Kidney (tissue), 22 donors: ENCODE measurements at regions of chr20 and their contacts with region 1.

Region 1: GRCh38 chr20:39885975-39886649 is 802.9 kb downstream of the MAFB start:
- DNase-seq: peak; percentile 52 to 72 (median 62)
- H3K4me3 ChIP-seq: no peak overlapping the region
- H3K27ac ChIP-seq: no peak overlapping the region
- H3K4me1 ChIP-seq: no peaks in the 10 kb centered on the region
- H3K27me3 ChIP-seq: no peaks in the 10 kb centered on the region
- CTCF ChIP-seq: peak; percentile 63

Region 2: DNA sequence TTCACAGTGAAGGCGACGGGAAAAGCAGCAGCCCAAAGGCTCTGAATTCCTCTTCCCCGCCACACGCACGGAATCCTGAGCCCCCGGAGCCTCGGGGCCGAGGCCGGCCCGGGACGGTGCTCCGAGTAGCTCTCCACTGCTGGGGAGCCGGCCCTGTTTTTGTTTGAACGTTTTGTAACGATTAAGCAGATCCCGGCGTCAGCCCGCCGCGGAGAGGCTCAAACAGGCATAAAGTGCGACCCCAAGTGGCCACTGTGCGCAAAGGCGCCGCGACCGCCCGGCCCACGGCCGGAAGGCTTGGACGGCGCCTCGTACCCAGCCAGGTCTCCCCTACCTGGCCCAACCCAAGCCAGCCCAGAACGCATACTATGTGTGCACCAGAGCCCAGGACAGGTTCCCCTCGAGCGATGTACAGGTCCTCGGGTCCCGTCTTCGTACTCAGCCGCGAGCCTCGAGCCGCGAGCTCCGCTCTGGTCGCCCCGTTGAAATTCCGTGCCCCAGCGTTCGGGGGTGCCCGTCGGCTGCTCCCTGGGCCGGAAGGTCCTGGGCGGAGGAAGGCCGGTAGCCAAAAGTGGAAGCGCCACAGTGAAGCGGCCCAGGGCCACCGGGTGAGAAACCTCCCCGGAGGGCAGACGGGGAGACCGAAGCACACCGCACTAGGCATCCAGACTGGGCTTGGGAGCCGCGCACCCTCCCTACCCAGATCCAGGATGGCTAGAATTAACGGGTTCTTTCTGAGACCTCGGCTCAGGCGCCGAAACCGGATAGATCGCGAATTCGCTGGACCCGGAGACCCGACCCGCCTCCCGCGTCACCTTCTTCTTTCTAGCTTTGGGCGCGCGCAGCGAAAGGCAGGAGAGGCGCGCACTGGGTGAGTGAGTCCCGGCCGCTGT is 804.1 kb after region 1 on chr20:
- intact Hi-C with region 1: loop called (anchors 10 kb)
- DNase-seq: peak; percentile 93 to 96 (median 95)
- H3K4me3 ChIP-seq: peak overlapping the region; percentile 58 to 73 (median 65)
- H3K27ac ChIP-seq: peak overlapping the region; percentile 90 to 92
- H3K4me1 ChIP-seq: peaks cover 0 to 13% (median 0%) of the 10 kb centered on the region in 3 donors
- H3K27me3 ChIP-seq: peaks cover 42% of the 10 kb centered on the region
- CTCF ChIP-seq: peak; percentile 91

Region 3: GRCh38 chr20:40945754-40946450 is 1059.8 kb after region 1 on chr20:
- intact Hi-C with region 1: loop called (anchors 10 kb)
- DNase-seq: peak in 4 of 5 donors; percentile 85 to 93 (median 87)
- H3K4me3 ChIP-seq: no peak overlapping the region
- H3K27ac ChIP-seq: no peak overlapping the region
- H3K4me1 ChIP-seq: no peaks in the 10 kb centered on the region
- H3K27me3 ChIP-seq: no peaks in the 10 kb centered on the region
- CTCF ChIP-seq: peak; percentile 51